Activated CD4-positive, alpha-beta memory T cell treated with anti-CD3 and anti-CD28 coated beads for 36 hours (primary cell): ENCODE measurements at regions of chrX and their contacts with region 1.

Region 1: GRCh38 chrX:41116948-41117347 is 31.7 kb downstream of the USP9X start:
- DNase-seq: no peak
- H3K4me3 Mint-ChIP-seq: peak overlapping the region; percentile 41
- H3K27ac Mint-ChIP-seq: peak overlapping the region; percentile 66
- H3K4me1 Mint-ChIP-seq: peaks cover 72% of the 10 kb centered on the region
- H3K27me3 Mint-ChIP-seq: no peaks in the 10 kb centered on the region

Region 2: GRCh38 chrX:40735325-40736169 is 381.4 kb before region 1 on chrX and contains the start of gene MED14:
- CTCF ChIA-PET with region 1: interaction called, 3 read pairs
- POLR2A ChIA-PET with region 1: no interaction called
- intact Hi-C with region 1: loop called (anchors 5 kb)
- DNase-seq: peak; percentile 93
- H3K4me3 Mint-ChIP-seq: peak within 1 kb of the TSS; percentile 84
- H3K27ac Mint-ChIP-seq: peak within 1 kb of the TSS; percentile 92
- H3K4me1 Mint-ChIP-seq: peaks cover 44% of the 10 kb centered on the region
- H3K27me3 Mint-ChIP-seq: no peaks in the 10 kb centered on the region
- total RNA-seq, gene MED14: 46.4 to 49.4 TPM

Region 3: DNA sequence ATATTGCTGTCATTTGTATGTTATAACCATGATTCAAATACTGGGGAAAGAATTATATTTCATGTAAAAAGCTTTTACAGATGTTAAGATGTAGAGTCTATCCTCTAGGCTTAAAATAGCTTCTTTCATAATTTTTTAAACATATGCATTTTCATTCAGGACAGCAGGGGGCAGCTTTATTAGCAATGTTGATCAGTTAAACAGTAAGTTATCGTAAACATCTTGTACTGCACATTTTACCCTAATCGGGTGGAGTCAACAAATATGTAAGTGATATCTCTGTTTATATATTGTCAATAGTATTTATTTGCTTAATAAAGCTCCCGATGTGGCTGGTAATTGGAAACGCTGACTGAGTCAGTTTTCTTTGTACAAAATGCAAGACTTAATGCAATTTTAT is 239.1 kb before region 1 on chrX:
- CTCF ChIA-PET with region 1: interaction called, 36 read pairs
- POLR2A ChIA-PET with region 1: no interaction called
- intact Hi-C with region 1: loop called (anchors 1 kb)
- DNase-seq: no peak
- H3K4me3 Mint-ChIP-seq: no peak overlapping the region
- H3K27ac Mint-ChIP-seq: no peak overlapping the region
- H3K4me1 Mint-ChIP-seq: peaks cover 3% of the 10 kb centered on the region
- H3K27me3 Mint-ChIP-seq: no peaks in the 10 kb centered on the region

Region 4: GRCh38 chrX:40952855-40953254 is 164.1 kb before region 1 on chrX:
- CTCF ChIA-PET with region 1: no interaction called
- POLR2A ChIA-PET with region 1: no interaction called
- intact Hi-C with region 1: loop called (anchors 5 kb)
- DNase-seq: peak; percentile 27
- H3K4me3 Mint-ChIP-seq: no peak overlapping the region
- H3K27ac Mint-ChIP-seq: peak overlapping the region; percentile 5
- H3K4me1 Mint-ChIP-seq: peaks cover 10% of the 10 kb centered on the region
- H3K27me3 Mint-ChIP-seq: no peaks in the 10 kb centered on the region

Region 5: DNA sequence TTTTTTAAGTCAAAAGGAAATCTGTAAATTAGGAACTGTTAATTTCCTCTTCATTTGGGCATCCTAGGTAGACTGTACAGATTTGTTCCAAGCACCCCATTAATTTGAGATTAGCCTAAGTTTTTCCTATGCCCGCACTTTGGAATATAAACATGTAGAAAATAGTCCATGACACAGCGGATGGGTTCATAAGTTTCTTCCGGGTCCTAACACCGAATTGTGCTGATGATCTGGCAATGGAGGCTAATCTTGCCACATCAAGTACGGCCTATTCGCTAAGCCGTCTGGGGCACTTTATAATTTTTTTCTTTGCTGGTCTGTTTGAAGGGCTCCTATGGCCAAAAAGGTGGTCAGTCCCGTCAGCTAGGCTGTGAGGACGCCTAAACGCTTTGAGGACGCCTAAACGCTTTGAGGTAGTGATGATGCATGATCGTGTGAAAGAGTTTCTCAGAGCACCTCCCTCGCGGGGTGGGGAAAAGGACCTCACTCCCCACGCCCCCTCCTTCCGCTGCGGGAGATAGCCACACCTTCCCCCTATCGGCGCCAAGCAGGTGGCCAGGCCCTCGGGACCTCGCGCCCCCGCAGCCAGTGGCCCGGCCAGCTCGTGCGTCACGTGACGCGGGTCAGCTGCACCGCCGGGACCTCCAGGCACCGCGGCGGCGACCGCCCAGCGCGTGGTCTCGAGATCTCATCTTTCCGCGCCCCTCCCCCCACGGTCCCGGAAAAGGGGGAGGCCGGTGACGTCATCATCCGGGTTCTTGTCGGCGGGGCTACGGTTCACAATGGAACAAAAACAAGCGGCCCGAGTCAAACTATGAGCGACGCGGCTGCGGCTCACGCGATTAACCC is 32.7 kb before region 1 on chrX:
- CTCF ChIA-PET with region 1: interaction called, 23 read pairs
- POLR2A ChIA-PET with region 1: interaction called, 13 read pairs
- intact Hi-C with region 1: loop called (anchors 2 kb)
- DNase-seq: peak; percentile 96
- H3K4me3 Mint-ChIP-seq: peak overlapping the region; percentile 80
- H3K27ac Mint-ChIP-seq: peak overlapping the region; percentile 100
- H3K4me1 Mint-ChIP-seq: peaks cover 14% of the 10 kb centered on the region
- H3K27me3 Mint-ChIP-seq: no peaks in the 10 kb centered on the region

Region 6: GRCh38 chrX:41198406-41198805 is 81.5 kb after region 1 on chrX:
- CTCF ChIA-PET with region 1: no interaction called
- POLR2A ChIA-PET with region 1: no interaction called
- intact Hi-C with region 1: no loop called
- DNase-seq: no peak
- H3K4me3 Mint-ChIP-seq: no peak overlapping the region
- H3K27ac Mint-ChIP-seq: no peak overlapping the region
- H3K4me1 Mint-ChIP-seq: no peaks in the 10 kb centered on the region
- H3K27me3 Mint-ChIP-seq: no peaks in the 10 kb centered on the region

Region 7: DNA sequence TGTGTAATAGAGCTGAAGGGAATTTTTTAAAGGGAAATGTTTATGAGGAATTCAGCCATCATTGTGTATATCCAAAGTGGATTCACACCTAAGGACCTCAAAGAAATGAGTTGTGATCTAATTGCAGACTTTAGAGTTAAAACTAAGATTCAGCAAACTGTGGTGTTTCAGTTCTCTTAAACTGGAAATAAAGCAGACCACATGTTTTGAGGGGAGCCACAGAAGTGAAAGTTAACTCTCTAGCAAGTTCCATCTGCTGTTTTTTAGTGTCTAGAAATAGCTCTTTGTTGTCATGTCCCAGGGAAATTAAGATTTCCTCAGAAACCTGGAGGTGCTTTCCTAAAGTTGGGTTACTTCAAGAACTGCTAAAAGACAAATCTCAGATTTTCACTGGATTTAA is 119.7 kb after region 1 on chrX:
- CTCF ChIA-PET with region 1: no interaction called
- POLR2A ChIA-PET with region 1: no interaction called
- intact Hi-C with region 1: no loop called
- DNase-seq: no peak
- H3K4me3 Mint-ChIP-seq: no peak overlapping the region
- H3K27ac Mint-ChIP-seq: no peak overlapping the region
- H3K4me1 Mint-ChIP-seq: peaks cover 2% of the 10 kb centered on the region
- H3K27me3 Mint-ChIP-seq: no peaks in the 10 kb centered on the region

Region 8: GRCh38 chrX:41322821-41323603 is 206.1 kb after region 1 on chrX:
- CTCF ChIA-PET with region 1: no interaction called
- POLR2A ChIA-PET with region 1: no interaction called
- intact Hi-C with region 1: no loop called
- DNase-seq: no peak
- H3K4me3 Mint-ChIP-seq: no peak overlapping the region
- H3K27ac Mint-ChIP-seq: no peak overlapping the region
- H3K4me1 Mint-ChIP-seq: peaks cover 3% of the 10 kb centered on the region
- H3K27me3 Mint-ChIP-seq: no peaks in the 10 kb centered on the region